ENCODE measurements at regions of chr7 and their contacts with region 1.

Region 1: GRCh38 chr7:36994456-36995112 is 270.3 kb upstream of the AOAH start:
- DNase-seq: no peak
- ATAC-seq: no peak

Region 2: DNA sequence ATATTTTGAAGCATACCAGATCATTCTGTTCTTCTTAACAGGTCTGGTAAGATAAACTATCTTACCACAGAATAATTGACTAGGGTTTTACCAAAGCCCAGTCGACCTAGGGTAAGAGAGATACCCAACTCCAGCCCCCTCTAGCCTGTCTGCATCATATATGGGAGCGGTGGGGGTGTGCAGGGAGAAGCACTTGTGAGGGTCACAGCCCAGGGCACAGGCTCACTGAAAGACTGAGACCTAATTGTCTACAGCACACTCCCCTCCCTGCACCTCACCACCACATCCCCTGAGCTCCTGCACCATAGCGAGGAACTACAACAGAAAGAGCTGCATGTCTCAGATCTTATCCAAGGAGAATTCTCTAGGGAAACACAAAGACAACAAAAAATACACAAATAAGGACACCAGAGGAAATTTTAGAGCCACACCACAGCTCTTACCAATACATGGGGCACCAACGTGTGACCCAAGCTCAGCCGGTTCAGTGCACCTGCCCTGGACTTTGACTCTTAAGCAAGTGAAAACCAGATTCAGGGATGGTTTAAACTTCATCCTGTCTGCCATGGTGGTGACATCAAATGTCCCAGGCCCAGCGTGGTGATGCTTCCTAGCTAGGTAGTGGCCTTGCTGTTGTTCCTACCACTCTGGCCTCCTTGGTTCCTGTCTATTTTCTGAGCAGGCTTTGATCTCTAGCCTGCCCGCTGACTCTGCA is 1450.4 kb before region 1 on chr7:
- intact Hi-C with region 1: loop called (anchors 10 kb)
- DNase-seq: no peak
- ATAC-seq: no peak